Activated naive CD4-positive, alpha-beta T cell treated with anti-CD3 and anti-CD28 coated beads, Interleukin-2, amount 10 ng/mL, durations not matched to agents 7 days and 5 days (primary cell): ENCODE measurements at regions of chr1 and their contacts with region 1.

Region 1: DNA sequence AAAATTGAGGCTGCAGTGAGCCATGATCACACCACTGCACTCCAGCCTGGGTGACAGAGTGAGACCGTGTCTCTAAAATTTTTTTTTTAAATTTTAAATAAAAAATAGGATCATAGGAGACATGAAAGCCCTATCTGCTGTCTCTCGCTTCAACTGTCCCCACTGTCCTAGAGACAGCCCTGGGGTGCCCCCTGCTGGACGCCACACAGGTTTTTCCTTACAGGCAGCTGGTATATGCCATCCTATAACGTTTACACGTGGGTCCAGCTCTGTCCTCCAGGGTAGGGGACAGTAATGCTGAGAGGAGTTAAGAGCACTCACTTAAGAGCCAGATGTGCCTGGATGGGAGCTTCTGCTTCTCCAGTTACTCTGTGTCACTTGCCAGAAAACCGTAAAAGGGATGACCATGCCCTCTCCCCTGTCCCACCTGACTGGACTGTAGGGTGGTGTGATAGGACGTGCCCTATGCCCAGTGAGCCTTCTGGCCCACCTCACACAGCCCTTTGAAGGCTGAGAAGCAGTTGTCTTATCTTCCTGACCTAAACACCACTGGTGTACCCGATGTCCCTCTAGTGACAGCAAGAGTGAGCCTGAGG is 8.5 kb downstream of the FBXO2 start:
- DNase-seq: peak; percentile 92
- H3K4me3 Mint-ChIP-seq: no peak overlapping the region
- H3K27ac Mint-ChIP-seq: no peak overlapping the region
- H3K4me1 Mint-ChIP-seq: peaks cover 20% of the 10 kb centered on the region
- H3K27me3 Mint-ChIP-seq: peaks cover 53% of the 10 kb centered on the region

Region 2: GRCh38 chr1:11248155-11248554 is 397.6 kb before region 1 on chr1:
- CTCF ChIA-PET with region 1: interaction called, 37 read pairs
- DNase-seq: no peak
- H3K4me3 Mint-ChIP-seq: no peak overlapping the region
- H3K27ac Mint-ChIP-seq: no peak overlapping the region
- H3K4me1 Mint-ChIP-seq: no peaks in the 10 kb centered on the region
- H3K27me3 Mint-ChIP-seq: no peaks in the 10 kb centered on the region

Region 3: DNA sequence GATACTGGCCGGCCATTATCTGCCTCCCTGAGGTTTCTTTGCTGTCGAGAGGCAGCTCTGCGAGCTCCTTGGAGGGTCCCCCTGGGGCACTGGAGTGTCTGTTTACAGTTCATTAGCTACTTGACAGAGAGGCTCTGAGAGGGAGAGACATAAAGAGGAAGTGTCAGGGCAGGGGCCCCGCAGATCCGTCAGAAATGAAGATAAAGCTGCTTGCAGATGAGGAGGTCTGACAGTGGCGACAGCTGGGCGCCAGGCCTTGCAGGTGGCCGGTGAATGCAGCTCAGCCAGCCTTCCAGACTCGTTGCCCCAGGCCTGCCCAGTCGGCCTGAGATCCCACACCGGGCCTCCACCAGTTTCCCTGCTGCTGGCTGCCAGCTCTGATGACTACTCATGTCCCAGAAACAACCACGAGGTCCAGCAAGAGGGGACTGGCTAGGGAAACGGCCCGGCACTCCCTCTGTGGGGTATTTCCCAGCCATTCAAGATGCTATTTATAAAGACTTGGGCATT is 82.2 kb before region 1 on chr1:
- CTCF ChIA-PET with region 1: no interaction called
- DNase-seq: no peak
- H3K4me3 Mint-ChIP-seq: no peak overlapping the region
- H3K27ac Mint-ChIP-seq: no peak overlapping the region
- H3K4me1 Mint-ChIP-seq: no peaks in the 10 kb centered on the region
- H3K27me3 Mint-ChIP-seq: peaks cover 54% of the 10 kb centered on the region

Region 4: GRCh38 chr1:11658308-11658941 is 12.7 kb after region 1 on chr1:
- CTCF ChIA-PET with region 1: interaction called, 10 read pairs
- DNase-seq: no peak
- H3K4me3 Mint-ChIP-seq: no peak overlapping the region
- H3K27ac Mint-ChIP-seq: no peak overlapping the region
- H3K4me1 Mint-ChIP-seq: peaks cover 12% of the 10 kb centered on the region
- H3K27me3 Mint-ChIP-seq: peaks cover 7% of the 10 kb centered on the region

Region 5: GRCh38 chr1:11719313-11720032 is 73.7 kb after region 1 on chr1:
- CTCF ChIA-PET with region 1: interaction called, 79 read pairs
- DNase-seq: peak; percentile 91
- H3K4me3 Mint-ChIP-seq: peak overlapping the region; percentile 73
- H3K27ac Mint-ChIP-seq: peak overlapping the region; percentile 93
- H3K4me1 Mint-ChIP-seq: peaks cover 20% of the 10 kb centered on the region
- H3K27me3 Mint-ChIP-seq: peaks cover 47% of the 10 kb centered on the region

Region 6: DNA sequence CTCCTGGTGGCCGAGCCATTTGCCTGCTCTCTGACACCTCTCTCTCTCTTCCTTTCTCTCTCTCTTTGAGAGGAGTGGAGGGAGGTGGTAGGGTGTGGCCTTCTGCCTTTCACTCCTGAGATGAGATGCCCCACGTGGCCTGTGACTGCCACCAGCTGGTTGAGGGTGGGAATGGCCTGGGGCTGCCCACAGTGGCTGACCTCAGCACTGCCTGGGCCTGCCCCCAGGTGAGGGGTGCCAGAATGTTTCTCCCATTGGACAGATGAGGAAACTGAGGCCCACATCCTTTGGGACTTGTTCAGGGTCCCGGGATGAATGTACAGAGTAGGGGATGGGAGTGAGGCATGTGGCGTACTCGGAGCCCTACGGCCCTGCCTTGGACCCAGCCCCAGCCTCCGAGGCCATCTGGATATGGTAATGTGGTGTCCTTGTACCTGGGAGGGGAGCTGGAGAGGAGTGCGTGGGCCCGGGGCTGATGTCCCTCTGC is 103.5 kb after region 1 on chr1:
- CTCF ChIA-PET with region 1: interaction called, 13 read pairs
- DNase-seq: peak; percentile 83
- H3K4me3 Mint-ChIP-seq: no peak overlapping the region
- H3K27ac Mint-ChIP-seq: no peak overlapping the region
- H3K4me1 Mint-ChIP-seq: peaks cover 34% of the 10 kb centered on the region
- H3K27me3 Mint-ChIP-seq: peaks cover 7% of the 10 kb centered on the region